ENCODE measurements at regions of chr1 and their contacts with region 1.

Region 1: DNA sequence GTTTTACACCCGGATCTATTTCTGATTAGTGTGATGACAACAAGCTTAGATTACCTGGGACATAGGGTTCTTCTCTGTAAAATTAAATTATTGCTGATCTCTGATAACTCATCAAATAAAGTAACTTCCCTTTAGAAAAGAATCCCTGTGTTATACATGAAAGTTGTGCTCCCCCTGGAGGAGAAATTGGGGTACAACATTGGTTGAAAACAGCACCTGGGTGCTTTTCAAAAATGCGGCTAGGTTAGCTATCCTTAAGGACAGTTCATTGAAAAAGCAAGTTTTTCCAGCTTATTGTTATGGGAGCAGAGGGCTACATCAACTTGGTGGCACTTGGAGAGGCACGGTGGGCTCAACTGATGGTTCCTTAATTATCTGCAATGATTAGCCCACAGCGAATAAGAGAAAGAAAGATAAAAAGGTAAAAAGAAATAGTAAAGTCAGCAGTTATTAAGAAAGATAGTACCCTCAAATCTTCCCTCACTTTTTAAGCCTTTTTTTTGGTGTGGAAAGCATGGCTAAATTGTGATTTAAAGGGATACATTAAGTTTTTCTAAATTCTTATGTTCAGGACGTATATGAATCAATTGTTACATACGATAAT is 97.8 kb downstream of the FMN2 start:
- DNase-seq: peak in 1 of 3 donors; percentile 69
- ATAC-seq: peak; percentile 57
- H3K4me3 ChIP-seq: no peak overlapping the region
- H3K4me1 ChIP-seq: no peaks in the 10 kb centered on the region
- CTCF ChIP-seq: peak; percentile 62

Region 2: GRCh38 chr1:240285541-240285940 is 96.1 kb after region 1 on chr1:
- intact Hi-C with region 1: no loop called
- DNase-seq: no peak
- ATAC-seq: no peak
- H3K4me3 ChIP-seq: no peak overlapping the region
- H3K4me1 ChIP-seq: peaks cover 8% of the 10 kb centered on the region
- CTCF ChIP-seq: no peak

Region 3: GRCh38 chr1:240611619-240612480 is 422.4 kb after region 1 on chr1 and contains the start of gene GREM2:
- intact Hi-C with region 1: loop called (anchors 10 kb)
- DNase-seq: peak; percentile 65 to 76 (median 66)
- ATAC-seq: peak; percentile 85
- H3K4me3 ChIP-seq: peak within 1 kb of the TSS; percentile 4
- H3K4me1 ChIP-seq: peaks cover 7% of the 10 kb centered on the region
- CTCF ChIP-seq: no peak
- total RNA-seq, gene GREM2: 5.1 to 25.5 (median 6.0) TPM

Region 4: DNA sequence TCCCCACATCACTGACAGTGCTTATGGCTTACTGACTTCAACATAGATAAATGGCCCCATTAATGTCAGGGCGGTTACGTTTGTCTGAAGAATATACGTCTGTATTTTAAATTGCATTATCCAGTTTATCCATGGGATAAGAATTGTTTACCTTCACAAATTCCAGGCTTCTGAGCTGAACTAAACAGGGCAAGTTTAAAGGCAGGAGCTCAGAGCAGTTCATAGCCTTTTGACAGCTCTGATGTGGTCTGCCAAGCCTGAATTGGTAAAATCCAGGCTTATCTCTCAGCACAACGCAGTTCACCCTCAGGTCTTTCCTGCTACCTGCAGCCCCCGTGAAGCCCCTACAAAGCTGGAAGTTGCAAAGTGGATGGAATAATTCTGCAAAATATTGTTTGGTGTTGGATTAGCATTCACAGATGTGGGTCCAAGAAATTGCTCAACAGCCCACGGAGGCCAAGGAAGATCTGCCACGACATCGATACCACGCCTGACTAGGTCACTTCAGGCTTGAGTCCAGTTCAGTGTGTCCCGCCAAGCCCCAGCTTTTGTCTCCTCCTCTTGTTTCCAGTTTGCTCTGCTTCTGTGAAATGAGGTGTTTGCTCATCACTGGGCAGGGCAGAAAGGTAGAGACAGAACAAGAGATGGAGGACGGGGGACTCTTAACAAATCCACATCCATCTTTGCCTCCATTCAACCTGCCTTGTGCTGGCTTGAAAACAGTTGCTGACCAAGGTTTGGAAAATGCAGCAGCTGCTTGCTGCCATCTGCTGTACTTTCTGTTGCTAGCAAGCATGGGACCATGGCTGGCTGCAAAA is 502.2 kb after region 1 on chr1:
- intact Hi-C with region 1: loop called in 1 of 2 experiments (anchors 2 kb)
- DNase-seq: peak in 2 of 3 donors; percentile 38 to 45
- ATAC-seq: peak; percentile 55
- H3K4me3 ChIP-seq: no peak overlapping the region
- H3K4me1 ChIP-seq: no peaks in the 10 kb centered on the region
- CTCF ChIP-seq: peak; percentile 34

Region 5: GRCh38 chr1:241130881-241131280 is 941.4 kb after region 1 on chr1:
- intact Hi-C with region 1: no loop called
- DNase-seq: no peak
- ATAC-seq: no peak
- H3K4me3 ChIP-seq: no peak overlapping the region
- H3K4me1 ChIP-seq: no peaks in the 10 kb centered on the region
- CTCF ChIP-seq: no peak